ENCODE measurements at regions of chr1 and their contacts with region 1.

Region 1: DNA sequence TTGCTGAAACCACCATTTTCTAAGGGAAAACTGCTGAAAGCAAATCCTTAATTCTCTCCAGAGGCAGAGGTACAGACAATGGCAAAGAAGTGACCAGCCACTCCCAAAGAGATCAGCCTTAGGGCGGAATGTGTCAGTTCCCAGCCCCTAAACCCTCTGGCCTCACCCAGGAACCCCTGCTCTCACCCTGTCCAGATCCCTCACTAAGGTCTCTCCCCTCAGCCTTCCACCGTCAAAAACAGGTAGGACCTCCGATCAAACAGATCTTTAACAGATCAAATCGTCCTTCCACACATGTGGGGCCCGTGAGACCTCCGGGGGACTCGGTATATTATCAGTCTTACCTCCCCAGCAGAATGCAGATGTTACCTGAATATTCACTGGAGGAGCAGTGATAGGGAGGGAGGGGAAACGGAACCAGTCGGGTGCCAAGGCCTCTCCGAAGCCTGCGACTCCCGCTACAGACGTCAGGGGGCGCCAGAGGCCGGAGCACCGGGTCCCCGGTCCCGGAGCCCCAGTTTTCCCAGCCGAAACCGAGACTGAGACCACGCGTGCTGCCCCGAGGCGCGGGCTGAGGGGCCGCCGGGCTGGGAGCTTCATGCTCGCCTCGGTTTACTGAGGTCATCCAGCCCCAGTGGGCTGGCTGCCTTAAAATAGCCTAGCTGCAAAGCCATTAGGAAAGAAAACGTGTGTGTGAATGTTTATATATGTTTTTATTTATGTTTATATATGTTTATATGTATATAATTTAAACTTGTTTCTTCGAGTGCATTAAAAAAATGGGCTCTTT is 23.6 kb downstream of the GPA33 start:
- DNase-seq: peak; percentile 51
- H3K4me3 ChIP-seq: peak overlapping the region; percentile 28 to 40 (median 35)
- H3K27ac ChIP-seq: no peak overlapping the region
- H3K4me1 ChIP-seq: no peaks in the 10 kb centered on the region
- H3K27me3 ChIP-seq: no peaks in the 10 kb centered on the region
- CTCF ChIP-seq: peak; percentile 61 to 96

Region 2: GRCh38 chr1:166875734-166876539 is 190.6 kb before region 1 on chr1 and contains the start of gene TADA1:
- CTCF ChIA-PET with region 1: no interaction called
- dilution Hi-C with region 1: loop called (anchors 25 kb)
- in situ Hi-C with region 1: loop called in 1 of 2 experiments (anchors 10 kb)
- intact Hi-C with region 1: no loop called
- DNase-seq: peak; percentile 98
- H3K4me3 ChIP-seq: peak within 1 kb of the TSS; percentile 76 to 87 (median 83)
- H3K27ac ChIP-seq: peak within 1 kb of the TSS; percentile 67
- H3K4me1 ChIP-seq: peaks cover 8% of the 10 kb centered on the region
- H3K27me3 ChIP-seq: no peaks in the 10 kb centered on the region
- CTCF ChIP-seq: no peak
- total RNA-seq, gene TADA1: 8.6 to 13.5 TPM

Region 3: DNA sequence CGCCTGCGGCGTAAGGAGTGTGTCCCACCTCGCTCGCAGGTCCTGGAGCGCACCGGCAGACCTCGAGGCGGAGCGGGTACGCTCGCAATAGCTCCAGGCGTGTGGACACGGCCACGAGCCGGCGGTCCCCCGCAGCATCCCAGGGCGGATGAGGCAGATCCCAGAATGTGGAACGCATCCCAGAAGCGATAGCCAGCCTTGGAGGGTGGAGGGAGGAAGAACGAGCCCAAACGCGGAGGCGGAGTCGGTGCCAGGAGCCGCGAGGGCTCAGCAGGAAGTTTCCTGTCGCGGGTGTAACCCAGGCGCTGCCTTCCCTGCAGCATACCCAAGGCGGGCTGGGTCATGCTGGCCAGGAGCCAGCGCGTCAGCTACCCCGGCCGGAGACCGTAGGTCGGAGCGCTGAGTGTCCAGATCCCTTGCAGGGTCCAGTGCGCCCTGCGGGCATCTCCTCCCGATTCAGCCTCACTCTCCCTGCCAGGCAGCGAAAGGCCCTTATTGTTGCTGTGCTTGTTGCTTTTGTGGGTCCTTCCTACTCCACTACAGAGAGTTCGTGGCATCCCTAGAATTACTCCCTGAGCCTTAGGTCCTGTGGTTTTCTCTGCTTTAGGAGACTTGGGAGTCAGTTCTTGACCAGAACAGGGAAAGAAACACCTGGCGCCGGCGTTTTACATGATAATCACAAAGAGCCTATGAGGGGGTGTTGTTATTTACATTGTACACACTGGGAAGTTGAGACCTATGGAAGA is 55.0 kb after region 1 on chr1:
- CTCF ChIA-PET with region 1: no interaction called
- dilution Hi-C with region 1: no loop called
- in situ Hi-C with region 1: loop called in 1 of 2 experiments (anchors 10 kb)
- intact Hi-C with region 1: loop called (anchors 1 kb)
- DNase-seq: peak; percentile 32
- H3K4me3 ChIP-seq: peak overlapping the region in 2 of 3 experiments; percentile 28 to 41
- H3K27ac ChIP-seq: no peak overlapping the region
- H3K4me1 ChIP-seq: peaks cover 6% of the 10 kb centered on the region
- H3K27me3 ChIP-seq: no peaks in the 10 kb centered on the region
- CTCF ChIP-seq: no peak

Region 4: DNA sequence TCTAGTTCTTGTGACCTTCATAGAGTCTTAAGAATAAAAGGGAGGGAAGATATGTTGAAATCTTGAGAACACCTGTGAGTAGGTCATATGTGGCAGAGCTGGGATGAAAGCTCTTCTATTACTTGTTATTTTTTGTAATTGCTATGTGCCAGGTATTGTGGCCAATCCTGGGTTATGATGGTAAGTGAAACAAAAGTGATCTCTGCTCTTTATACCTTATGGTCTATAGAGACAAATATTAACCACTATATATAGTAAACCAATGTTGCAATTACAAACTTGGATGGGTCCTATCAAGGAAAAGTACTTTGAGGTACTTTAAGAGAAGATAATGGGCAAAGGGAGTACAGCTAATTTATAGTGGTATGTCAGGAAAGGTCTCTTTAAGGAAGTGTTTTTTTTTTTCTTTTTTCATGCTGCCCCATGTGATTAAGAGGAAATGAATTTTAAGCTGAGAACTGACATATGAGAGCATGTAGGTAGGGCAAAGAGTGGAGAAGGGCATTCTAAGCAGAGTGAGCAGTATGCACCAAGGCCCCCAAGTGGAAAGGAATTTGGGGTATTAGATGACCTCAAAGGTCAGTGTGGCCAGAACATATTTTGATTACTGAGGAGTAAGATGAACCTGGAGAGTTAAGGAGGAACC is 197.4 kb after region 1 on chr1:
- CTCF ChIA-PET with region 1: no interaction called
- dilution Hi-C with region 1: no loop called
- in situ Hi-C with region 1: no loop called
- intact Hi-C with region 1: loop called (anchors 1 kb)
- DNase-seq: no peak
- H3K4me3 ChIP-seq: no peak overlapping the region
- H3K27ac ChIP-seq: no peak overlapping the region
- H3K4me1 ChIP-seq: no peaks in the 10 kb centered on the region
- H3K27me3 ChIP-seq: no peaks in the 10 kb centered on the region
- CTCF ChIP-seq: no peak

Region 5: GRCh38 chr1:167342846-167343245 is 276.3 kb after region 1 on chr1:
- CTCF ChIA-PET with region 1: no interaction called
- dilution Hi-C with region 1: no loop called
- in situ Hi-C with region 1: no loop called
- intact Hi-C with region 1: loop called (anchors 2 kb)
- DNase-seq: no peak
- H3K4me3 ChIP-seq: no peak overlapping the region
- H3K27ac ChIP-seq: no peak overlapping the region
- H3K4me1 ChIP-seq: no peaks in the 10 kb centered on the region
- H3K27me3 ChIP-seq: no peaks in the 10 kb centered on the region
- CTCF ChIP-seq: peak; percentile 5 to 46

Region 6: DNA sequence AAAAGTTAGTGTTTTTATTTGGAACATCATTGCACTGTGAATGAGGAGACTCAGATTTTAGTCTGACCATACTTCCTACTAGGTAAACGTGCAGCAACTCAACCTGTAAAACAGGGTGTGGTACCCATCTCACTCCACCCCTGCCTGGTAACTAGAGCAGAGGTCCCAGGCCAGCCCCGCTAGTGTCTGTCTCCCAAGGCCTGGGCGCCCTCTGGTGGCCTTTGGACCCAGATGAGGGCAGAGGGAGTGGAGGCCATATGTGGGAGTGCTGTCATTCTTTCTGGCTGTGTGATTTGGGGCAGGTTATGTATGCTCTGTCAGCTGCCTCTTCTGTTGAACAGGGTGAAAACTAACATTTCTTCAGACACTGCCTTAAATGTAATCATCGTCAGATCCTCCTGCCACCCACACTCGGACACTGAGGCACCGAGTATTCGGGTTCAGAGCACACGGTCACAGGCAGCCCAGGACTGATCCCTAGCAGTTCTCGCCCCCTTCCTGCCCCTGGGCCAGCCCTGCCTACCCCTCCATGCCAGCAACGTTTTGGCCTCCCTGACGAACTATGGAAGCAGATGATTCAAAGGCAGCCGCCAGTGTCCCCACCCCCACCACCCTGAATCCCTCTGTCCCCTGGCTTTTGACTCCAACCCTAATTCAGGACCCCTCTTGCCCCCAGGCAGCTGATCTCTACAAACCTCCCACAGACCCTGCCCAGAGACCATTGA is 375.8 kb after region 1 on chr1:
- CTCF ChIA-PET with region 1: no interaction called
- dilution Hi-C with region 1: loop called (anchors 25 kb)
- in situ Hi-C with region 1: loop called (anchors 5 to 10 kb)
- intact Hi-C with region 1: loop called (anchors 1 kb)
- DNase-seq: peak; percentile 73
- H3K4me3 ChIP-seq: no peak overlapping the region
- H3K27ac ChIP-seq: no peak overlapping the region
- H3K4me1 ChIP-seq: peaks cover 6% of the 10 kb centered on the region
- H3K27me3 ChIP-seq: no peaks in the 10 kb centered on the region
- CTCF ChIP-seq: peak; percentile 92

Region 7: DNA sequence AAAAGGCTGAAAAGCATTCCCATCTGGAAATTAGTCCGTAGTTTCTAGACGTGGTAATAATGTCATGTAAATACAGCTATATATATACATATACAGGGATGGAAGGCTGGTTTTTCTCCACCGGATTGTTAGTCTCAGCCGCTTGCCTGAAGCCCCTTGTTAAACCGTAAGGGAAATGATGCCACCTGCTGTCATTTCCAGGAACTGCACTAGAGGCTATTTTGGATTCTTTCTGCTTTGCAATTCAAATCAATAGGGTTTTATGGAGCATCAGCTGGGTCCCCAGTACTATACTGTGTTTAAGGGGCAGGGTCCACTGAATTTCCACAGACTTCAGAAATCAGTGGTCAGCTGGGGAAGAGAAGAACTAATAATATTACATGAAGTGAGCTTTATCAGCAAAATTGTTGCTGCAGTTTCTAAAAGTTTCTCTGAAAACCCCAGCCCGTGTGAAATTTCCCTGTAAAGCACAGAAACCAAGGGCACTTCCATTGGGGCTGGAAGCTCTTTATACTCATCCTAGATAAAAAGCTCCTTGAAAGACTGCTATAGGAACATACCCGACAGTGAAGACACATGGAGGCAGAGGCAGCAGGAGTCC is 621.5 kb after region 1 on chr1:
- CTCF ChIA-PET with region 1: no interaction called
- dilution Hi-C with region 1: no loop called
- in situ Hi-C with region 1: no loop called
- intact Hi-C with region 1: loop called (anchors 1 kb)
- DNase-seq: peak; percentile 65
- H3K4me3 ChIP-seq: no peak overlapping the region
- H3K27ac ChIP-seq: no peak overlapping the region
- H3K4me1 ChIP-seq: peaks cover 27% of the 10 kb centered on the region
- H3K27me3 ChIP-seq: no peaks in the 10 kb centered on the region
- CTCF ChIP-seq: peak; percentile 87 to 90